B cell (primary cell): ENCODE measurements at regions of chr6 and their contacts with region 1.

Region 1: GRCh38 chr6:26122793-26123674 is 35.8 kb downstream of the HFE start:
- DNase-seq: peak; percentile 97
- ATAC-seq: peak; percentile 59
- H3K4me3 ChIP-seq: peak overlapping the region; percentile 87 to 100 (median 96)
- H3K4me3 Mint-ChIP-seq: peak overlapping the region; percentile 93
- H3K27ac ChIP-seq: peak overlapping the region; percentile 87 to 88
- H3K27ac Mint-ChIP-seq: peak overlapping the region; percentile 97
- H3K4me1 ChIP-seq: peaks cover 19 to 23% of the 10 kb centered on the region in 2 donors
- H3K4me1 Mint-ChIP-seq: peaks cover 26% of the 10 kb centered on the region
- H3K27me3 ChIP-seq: no peaks in the 10 kb centered on the region
- H3K27me3 Mint-ChIP-seq: no peaks in the 10 kb centered on the region
- CTCF ChIP-seq: no peak

Region 2: DNA sequence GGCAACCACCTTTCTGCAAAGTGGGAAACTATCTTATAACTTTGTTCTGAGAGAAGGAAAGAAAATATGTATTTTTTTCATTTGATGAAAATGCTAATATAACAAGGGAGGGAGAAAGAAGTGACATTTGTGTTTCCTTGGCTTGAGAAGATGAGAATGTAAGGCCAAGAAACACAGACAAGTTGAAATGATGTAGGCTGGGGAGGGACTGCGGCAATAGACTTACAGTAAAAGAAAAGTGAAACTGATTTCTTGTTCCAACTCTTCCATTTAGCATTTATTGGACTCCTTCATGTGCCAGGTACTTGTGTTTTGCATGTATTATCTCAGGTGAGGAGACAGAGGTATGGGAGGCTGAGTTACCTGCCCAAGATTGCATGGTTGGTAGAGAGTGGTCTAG is 712.9 kb before region 1 on chr6:
- CTCF ChIA-PET with region 1: no interaction called
- POLR2A ChIA-PET with region 1: interaction called, 11 read pairs
- intact Hi-C with region 1: no loop called
- DNase-seq: no peak
- ATAC-seq: no peak
- H3K4me3 ChIP-seq: peak overlapping the region in 1 of 5 experiments; percentile 23
- H3K4me3 Mint-ChIP-seq: peak overlapping the region; percentile 59
- H3K27ac ChIP-seq: no peak overlapping the region
- H3K27ac Mint-ChIP-seq: no peak overlapping the region
- H3K4me1 ChIP-seq: peaks cover 49 to 54% of the 10 kb centered on the region in 2 donors
- H3K4me1 Mint-ChIP-seq: peaks cover 32% of the 10 kb centered on the region
- H3K27me3 ChIP-seq: no peaks in the 10 kb centered on the region
- H3K27me3 Mint-ChIP-seq: no peaks in the 10 kb centered on the region
- CTCF ChIP-seq: no peak

Region 3: GRCh38 chr6:26045065-26045927 is 77.7 kb before region 1 on chr6:
- CTCF ChIA-PET with region 1: interaction called, 3 read pairs
- POLR2A ChIA-PET with region 1: interaction called, 42 read pairs
- intact Hi-C with region 1: loop called (anchors 1 kb)
- DNase-seq: peak; percentile 90
- ATAC-seq: peak; percentile 58
- H3K4me3 ChIP-seq: peak overlapping the region; percentile 56 to 98 (median 69)
- H3K4me3 Mint-ChIP-seq: peak overlapping the region; percentile 87
- H3K27ac ChIP-seq: peak overlapping the region; percentile 85 to 89
- H3K27ac Mint-ChIP-seq: peak overlapping the region; percentile 99
- H3K4me1 ChIP-seq: peaks cover 14 to 29% of the 10 kb centered on the region in 2 donors
- H3K4me1 Mint-ChIP-seq: peaks cover 17% of the 10 kb centered on the region
- H3K27me3 ChIP-seq: no peaks in the 10 kb centered on the region
- H3K27me3 Mint-ChIP-seq: no peaks in the 10 kb centered on the region
- CTCF ChIP-seq: no peak

Region 4: GRCh38 chr6:26103770-26104456 is 19.1 kb before region 1 on chr6:
- CTCF ChIA-PET with region 1: interaction called, 17 read pairs
- POLR2A ChIA-PET with region 1: interaction called, 63 read pairs
- intact Hi-C with region 1: loop called (anchors 1 kb)
- DNase-seq: peak; percentile 98
- ATAC-seq: peak; percentile 87
- H3K4me3 ChIP-seq: peak overlapping the region; percentile 52 to 81 (median 62)
- H3K4me3 Mint-ChIP-seq: peak overlapping the region; percentile 88
- H3K27ac ChIP-seq: peak overlapping the region; percentile 78 to 79
- H3K27ac Mint-ChIP-seq: peak overlapping the region; percentile 99
- H3K4me1 ChIP-seq: peaks cover 5 to 15% of the 10 kb centered on the region in 2 donors
- H3K4me1 Mint-ChIP-seq: peaks cover 15% of the 10 kb centered on the region
- H3K27me3 ChIP-seq: no peaks in the 10 kb centered on the region
- H3K27me3 Mint-ChIP-seq: no peaks in the 10 kb centered on the region
- CTCF ChIP-seq: peak; percentile 66

Region 5: DNA sequence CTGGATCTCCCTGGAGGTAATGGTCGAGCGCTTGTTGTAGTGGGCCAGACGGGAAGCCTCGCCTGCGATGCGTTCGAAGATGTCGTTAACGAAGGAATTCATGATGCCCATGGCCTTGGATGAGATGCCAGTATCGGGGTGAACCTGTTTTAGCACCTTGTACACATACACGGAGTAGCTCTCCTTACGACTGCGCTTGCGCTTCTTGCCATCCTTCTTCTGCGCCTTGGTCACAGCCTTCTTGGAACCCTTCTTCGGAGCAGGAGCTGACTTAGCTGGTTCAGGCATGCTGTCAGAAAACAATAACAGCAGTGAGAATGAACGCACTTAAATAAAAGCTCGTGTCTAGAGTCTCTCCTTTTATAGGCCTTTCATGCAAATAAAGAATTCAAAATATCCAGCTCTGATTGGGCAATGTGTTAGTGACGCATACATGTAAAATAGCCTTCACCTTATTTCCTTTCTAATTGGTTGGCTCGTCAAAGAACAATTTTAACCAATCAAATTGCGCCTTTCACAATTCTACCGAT is 93.4 kb after region 1 on chr6:
- CTCF ChIA-PET with region 1: interaction called, 6 read pairs
- POLR2A ChIA-PET with region 1: interaction called, 40 read pairs
- intact Hi-C with region 1: no loop called
- DNase-seq: peak; percentile 96
- ATAC-seq: peak; percentile 80
- H3K4me3 ChIP-seq: peak overlapping the region; percentile 70 to 93 (median 74)
- H3K4me3 Mint-ChIP-seq: no peak overlapping the region
- H3K27ac ChIP-seq: peak overlapping the region; percentile 81 to 82
- H3K27ac Mint-ChIP-seq: no peak overlapping the region
- H3K4me1 ChIP-seq: peaks cover 15 to 26% of the 10 kb centered on the region in 2 donors
- H3K4me1 Mint-ChIP-seq: peaks cover 19% of the 10 kb centered on the region
- H3K27me3 ChIP-seq: no peaks in the 10 kb centered on the region
- H3K27me3 Mint-ChIP-seq: no peaks in the 10 kb centered on the region
- CTCF ChIP-seq: no peak

Region 6: GRCh38 chr6:26270903-26271667 is 148.1 kb after region 1 on chr6:
- CTCF ChIA-PET with region 1: interaction called, 4 read pairs
- POLR2A ChIA-PET with region 1: interaction called, 17 read pairs
- intact Hi-C with region 1: loop called (anchors 1 kb)
- DNase-seq: peak; percentile 90
- ATAC-seq: peak; percentile 19
- H3K4me3 ChIP-seq: peak overlapping the region; percentile 63 to 88 (median 75)
- H3K4me3 Mint-ChIP-seq: no peak overlapping the region
- H3K27ac ChIP-seq: peak overlapping the region; percentile 79 to 86
- H3K27ac Mint-ChIP-seq: no peak overlapping the region
- H3K4me1 ChIP-seq: peaks cover 15 to 37% of the 10 kb centered on the region in 2 donors
- H3K4me1 Mint-ChIP-seq: peaks cover 20% of the 10 kb centered on the region
- H3K27me3 ChIP-seq: no peaks in the 10 kb centered on the region
- H3K27me3 Mint-ChIP-seq: no peaks in the 10 kb centered on the region
- CTCF ChIP-seq: no peak